ENCODE measurements at regions of chr14 and their contacts with region 1.

Region 1: DNA sequence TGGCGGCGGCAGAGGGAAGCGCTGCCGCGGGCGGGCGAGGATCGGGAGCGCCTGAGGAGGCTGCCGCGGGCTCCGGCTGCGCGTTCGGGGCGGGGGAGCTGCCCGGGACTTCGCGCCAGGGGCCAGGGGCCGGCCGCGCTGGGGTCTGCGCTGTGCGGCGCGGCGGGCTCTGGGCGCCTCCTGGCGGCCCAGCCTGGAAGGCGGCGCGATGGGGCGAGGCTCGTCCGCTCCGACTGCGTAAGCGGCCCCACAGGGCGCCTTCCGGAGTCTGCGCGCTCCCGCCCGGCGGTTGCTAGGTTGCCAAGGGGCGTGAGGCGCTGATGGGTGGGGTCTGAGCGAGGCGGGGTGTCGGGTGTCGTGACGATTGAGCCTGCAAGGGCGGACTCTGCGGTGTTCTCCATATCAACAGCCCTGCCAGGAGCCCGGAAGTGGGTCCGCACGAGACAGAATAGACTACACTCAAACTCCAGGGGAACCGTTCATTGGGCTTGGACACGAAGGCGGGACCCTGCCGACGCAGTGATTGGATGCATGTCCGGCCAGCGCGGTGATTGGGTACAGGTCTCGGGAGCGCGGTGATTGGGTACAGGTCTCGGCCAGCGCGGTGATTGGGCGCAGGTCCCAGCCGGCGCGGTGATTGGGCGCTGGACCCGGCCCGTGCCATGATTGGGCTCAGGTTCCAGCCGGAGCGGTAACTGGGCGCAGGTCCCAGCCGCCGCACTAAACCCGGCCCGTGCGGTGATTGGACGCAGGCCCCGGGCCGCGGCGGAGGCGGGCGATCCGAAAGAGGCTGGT is at the start of gene TEDC1:
- DNase-seq: peak; percentile 95
- H3K4me3 ChIP-seq: peak within 1 kb of the TSS; percentile 70 to 82
- H3K27ac ChIP-seq: peak within 1 kb of the TSS; percentile 82 to 91
- H3K4me1 ChIP-seq: peaks cover 5 to 27% of the 10 kb centered on the region in 2 experiments; a peak in 2 of 4 replicates
- H3K27me3 ChIP-seq: no peaks in the 10 kb centered on the region
- CTCF ChIP-seq: peak; percentile 63
- EP300 ChIP-seq: no peak
- RAD21 ChIP-seq: peak; percentile 73
- polyA plus RNA-seq, gene TEDC1: 10.9 and 13.4 TPM in 2 replicates

Region 2: GRCh38 chr14:105363847-105364708 is 126.7 kb before region 1 on chr14:
- CTCF ChIA-PET with region 1: interaction called, 135 read pairs
- POLR2A ChIA-PET with region 1: no interaction called
- DNase-seq: peak; percentile 95
- H3K4me3 ChIP-seq: peak overlapping the region in 1 of 2 experiments; percentile 33; a peak in 2 of 4 replicates
- H3K27ac ChIP-seq: no peak overlapping the region
- H3K4me1 ChIP-seq: peaks cover 4 to 7% of the 10 kb centered on the region in 2 experiments; a peak in 2 of 4 replicates
- H3K27me3 ChIP-seq: no peaks in the 10 kb centered on the region
- CTCF ChIP-seq: no peak
- EP300 ChIP-seq: no peak
- RAD21 ChIP-seq: no peak

Region 3: GRCh38 chr14:105398044-105398725 is 92.6 kb before region 1 on chr14 and contains the start of gene TEX22:
- CTCF ChIA-PET with region 1: interaction called, 14 read pairs
- POLR2A ChIA-PET with region 1: interaction called, 4 read pairs
- DNase-seq: peak; percentile 99
- H3K4me3 ChIP-seq: peak within 1 kb of the TSS; percentile 60 to 80
- H3K27ac ChIP-seq: peak within 1 kb of the TSS; percentile 39 to 91
- H3K4me1 ChIP-seq: peaks cover 0 to 19% of the 10 kb centered on the region in 2 experiments; a peak in 1 of 4 replicates
- H3K27me3 ChIP-seq: no peaks in the 10 kb centered on the region
- CTCF ChIP-seq: 0 out of 2 replicates have a peak, but pooled peaks have one; percentile 14
- EP300 ChIP-seq: 0 out of 4 replicates have a peak, but pooled peaks of 1 of the 2 experiments have one; percentile 9
- RAD21 ChIP-seq: no peak
- polyA plus RNA-seq, gene TEX22: 0.26 and 0.29 TPM in 2 replicates

Region 4: DNA sequence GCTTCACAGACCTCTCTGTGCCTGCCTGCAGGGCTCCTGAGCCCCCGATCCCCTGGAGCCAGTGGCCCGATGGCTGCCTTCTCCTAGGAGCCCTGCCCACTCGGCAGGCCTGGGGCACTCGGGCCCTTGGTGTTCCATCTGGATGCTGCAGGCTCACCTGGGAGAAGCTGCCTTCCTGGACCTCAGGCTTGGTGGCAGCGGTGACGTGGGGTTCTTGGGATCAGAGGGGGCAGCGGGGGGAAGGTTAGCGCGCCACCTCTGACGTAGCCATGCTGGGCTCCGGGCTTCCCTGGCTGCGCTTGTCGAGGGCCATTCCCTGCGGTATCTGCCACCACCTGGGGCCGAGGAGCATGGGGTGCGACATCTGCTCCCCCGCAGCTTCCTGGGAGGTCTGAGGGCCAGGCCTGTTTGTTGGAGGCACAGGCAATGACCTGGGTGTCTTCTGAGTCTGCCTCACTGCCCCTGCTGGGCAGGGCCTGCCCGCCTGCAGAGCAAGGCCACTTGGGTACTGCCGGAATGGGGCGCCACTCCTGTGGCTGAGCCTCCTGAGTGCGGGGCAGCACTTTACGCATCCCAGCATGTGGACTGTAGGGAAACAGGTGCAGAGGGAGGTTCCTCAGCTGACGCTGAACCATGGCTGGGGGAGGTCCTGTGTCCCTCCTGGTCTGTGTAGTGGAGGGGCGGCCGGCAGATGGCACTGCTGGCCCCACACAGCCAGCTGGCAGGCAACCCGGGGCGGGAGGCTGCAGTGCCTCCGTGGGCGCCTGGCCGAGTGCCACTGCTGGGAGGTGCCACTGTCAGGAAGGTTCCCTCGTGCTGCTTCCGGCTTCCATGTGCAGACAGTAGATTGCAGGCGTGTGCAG is 50.8 kb before region 1 on chr14:
- CTCF ChIA-PET with region 1: interaction called, 11 read pairs
- POLR2A ChIA-PET with region 1: no interaction called
- DNase-seq: peak; percentile 68
- H3K4me3 ChIP-seq: no peak overlapping the region
- H3K27ac ChIP-seq: no peak overlapping the region
- H3K4me1 ChIP-seq: peaks cover 0 to 8% of the 10 kb centered on the region in 2 experiments; a peak in 1 of 4 replicates
- H3K27me3 ChIP-seq: no peaks in the 10 kb centered on the region
- CTCF ChIP-seq: no peak
- EP300 ChIP-seq: no peak
- RAD21 ChIP-seq: no peak

Region 5: GRCh38 chr14:105456736-105457617 is 33.8 kb before region 1 on chr14:
- CTCF ChIA-PET with region 1: interaction called, 28 read pairs
- POLR2A ChIA-PET with region 1: interaction called, 3 read pairs
- DNase-seq: no peak
- H3K4me3 ChIP-seq: no peak overlapping the region
- H3K27ac ChIP-seq: no peak overlapping the region; a peak in 1 of 4 replicates
- H3K4me1 ChIP-seq: peaks cover 0 to 7% of the 10 kb centered on the region in 2 experiments; a peak in 1 of 4 replicates
- H3K27me3 ChIP-seq: no peaks in the 10 kb centered on the region
- CTCF ChIP-seq: no peak
- EP300 ChIP-seq: no peak
- RAD21 ChIP-seq: no peak

Region 6: GRCh38 chr14:105527661-105528581 is 37.2 kb after region 1 on chr14:
- CTCF ChIA-PET with region 1: interaction called, 61 read pairs
- POLR2A ChIA-PET with region 1: no interaction called
- DNase-seq: peak; percentile 97
- H3K4me3 ChIP-seq: peak overlapping the region; percentile 64 to 69
- H3K27ac ChIP-seq: peak overlapping the region; percentile 27 to 53; a peak in 2 of 4 replicates
- H3K4me1 ChIP-seq: peaks cover 4 to 17% of the 10 kb centered on the region in 2 experiments; a peak in 2 of 4 replicates
- H3K27me3 ChIP-seq: no peaks in the 10 kb centered on the region
- CTCF ChIP-seq: peak; percentile 68
- EP300 ChIP-seq: no peak
- RAD21 ChIP-seq: peak; percentile 83

Region 7: DNA sequence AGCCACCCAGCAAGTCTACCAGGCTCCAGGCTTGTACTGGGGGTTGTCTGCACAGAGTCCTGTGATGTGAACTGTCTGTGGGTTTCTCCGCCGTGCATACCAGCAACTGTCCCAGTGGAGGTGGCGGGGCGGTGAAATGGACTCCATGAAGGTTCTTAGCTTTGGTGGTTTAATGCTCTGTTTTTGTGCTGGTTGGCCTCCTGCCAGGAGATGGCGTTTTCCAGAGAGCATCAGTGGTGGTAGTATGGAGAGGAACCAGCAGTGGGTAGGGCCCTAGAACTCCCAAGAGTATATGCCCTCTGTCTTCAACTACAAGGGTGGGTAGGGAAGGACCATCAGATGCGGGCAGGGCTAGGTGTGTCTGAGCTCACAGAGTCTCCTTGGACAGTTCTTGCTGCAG is 339.4 kb after region 1 on chr14:
- CTCF ChIA-PET with region 1: no interaction called
- POLR2A ChIA-PET with region 1: no interaction called
- DNase-seq: no peak
- H3K4me3 ChIP-seq: no peak overlapping the region
- H3K27ac ChIP-seq: no peak overlapping the region
- H3K4me1 ChIP-seq: no peaks in the 10 kb centered on the region
- H3K27me3 ChIP-seq: no peaks in the 10 kb centered on the region
- CTCF ChIP-seq: no peak
- EP300 ChIP-seq: no peak
- RAD21 ChIP-seq: no peak

Region 8: DNA sequence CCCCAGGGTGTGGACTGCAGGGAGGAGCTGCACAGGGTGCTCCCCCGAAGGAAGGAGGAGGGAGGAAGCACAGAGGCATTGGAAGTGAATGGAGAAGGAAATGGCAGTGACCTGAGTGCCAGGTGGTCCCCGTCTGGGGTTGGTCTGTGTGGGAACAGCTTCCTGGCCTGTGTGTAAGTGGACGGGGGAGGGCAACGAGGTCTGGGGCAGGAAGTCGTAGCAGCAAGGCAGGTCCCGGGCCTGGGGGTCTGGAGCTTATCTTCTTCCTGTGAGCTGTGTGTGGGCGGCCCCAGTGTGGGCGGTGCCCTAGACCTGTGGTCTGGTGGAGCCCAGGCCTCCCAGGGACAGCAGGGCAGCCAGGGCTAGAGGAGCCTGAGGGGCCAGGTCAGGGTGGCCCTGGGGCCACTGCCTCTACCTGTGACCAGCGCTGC is 417.7 kb after region 1 on chr14:
- CTCF ChIA-PET with region 1: no interaction called
- POLR2A ChIA-PET with region 1: no interaction called
- DNase-seq: peak; percentile 87
- H3K4me3 ChIP-seq: no peak overlapping the region
- H3K27ac ChIP-seq: peak overlapping the region in 1 of 2 experiments; percentile 80; a peak in 2 of 4 replicates
- H3K4me1 ChIP-seq: peaks cover 0 to 64% of the 10 kb centered on the region in 2 experiments; a peak in 1 of 4 replicates
- H3K27me3 ChIP-seq: no peaks in the 10 kb centered on the region
- CTCF ChIP-seq: no peak
- EP300 ChIP-seq: peak in 1 of 2 experiments; percentile 60; a peak in 1 of 4 replicates
- RAD21 ChIP-seq: no peak

Measured in SK-N-SH (cell line).